Heart right ventricle (tissue), 16 donors: ENCODE measurements at regions of chr9 and their contacts with region 1.

Region 1: DNA sequence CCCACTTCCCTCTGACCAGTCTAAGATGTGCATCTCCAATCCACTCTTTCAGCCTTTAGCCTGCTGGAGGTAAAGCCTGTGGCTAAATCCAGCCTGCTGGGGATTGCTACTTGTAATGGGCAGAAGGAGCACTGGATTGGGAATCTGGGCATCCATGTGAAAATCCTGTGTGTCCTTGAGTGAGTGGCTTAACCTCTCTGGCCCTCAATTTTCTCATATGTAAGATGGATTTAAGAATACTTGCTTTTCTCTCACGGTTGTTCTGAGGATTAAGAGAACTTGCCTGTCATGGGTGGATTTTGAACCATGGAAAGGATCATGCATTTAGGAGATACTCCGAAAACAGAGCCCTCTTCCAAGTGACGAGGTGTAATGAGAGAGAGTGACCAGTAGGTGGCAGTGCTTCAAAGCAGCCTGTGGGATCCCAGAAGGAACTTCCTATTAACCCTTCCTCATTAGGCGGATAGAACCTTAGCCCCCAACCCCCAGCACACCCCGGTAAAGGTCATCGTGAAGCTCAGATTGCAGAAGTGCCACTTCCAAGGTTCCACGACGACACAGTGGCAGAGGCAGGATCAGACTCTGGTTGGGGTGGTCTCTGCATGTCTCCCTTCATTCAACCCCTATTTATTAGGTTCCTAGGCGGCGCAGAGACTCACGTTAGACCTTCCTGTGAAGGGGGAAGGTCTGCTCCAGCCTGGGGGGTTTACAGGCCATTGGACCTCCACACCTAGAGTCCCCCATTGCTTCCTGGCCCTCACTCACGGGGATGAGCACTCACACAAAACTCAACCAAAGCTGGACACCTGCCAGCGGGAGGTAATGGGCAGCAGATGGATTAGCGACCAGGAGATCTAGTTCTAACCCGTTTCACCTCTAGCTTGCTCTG is 68.7 kb upstream of the ZNF618 start:
- DNase-seq: peak in 1 of 2 donors; percentile 48
- ATAC-seq: peak; percentile 47 to 83 (median 70)
- H3K4me3 ChIP-seq: peak overlapping the region in 5 of 10 donors; percentile 7 to 24 (median 21)
- H3K27ac ChIP-seq: no peak overlapping the region
- H3K4me1 ChIP-seq: peaks cover 0 to 12% (median 4%) of the 10 kb centered on the region in 9 donors
- H3K27me3 ChIP-seq: peaks cover 0 to 16% (median 2%) of the 10 kb centered on the region in 7 donors
- CTCF ChIP-seq: peak; percentile 82 to 94 (median 90)

Region 2: GRCh38 chr9:113737517-113738271 is 69.7 kb before region 1 on chr9:
- intact Hi-C with region 1: loop called in 1 of 10 experiments (anchors 5 kb)
- DNase-seq: peak in 1 of 2 donors; percentile 42
- ATAC-seq: peak in 1 of 8 donors; percentile 57
- H3K4me3 ChIP-seq: no peak overlapping the region
- H3K27ac ChIP-seq: no peak overlapping the region
- H3K4me1 ChIP-seq: no peaks in the 10 kb centered on the region
- H3K27me3 ChIP-seq: peaks cover 0 to 23% (median 15%) of the 10 kb centered on the region in 7 donors
- CTCF ChIP-seq: peak; percentile 26 to 83 (median 69)

Region 3: GRCh38 chr9:113756476-113757192 is 50.8 kb before region 1 on chr9:
- intact Hi-C with region 1: no loop called
- DNase-seq: no peak
- ATAC-seq: no peak
- H3K4me3 ChIP-seq: no peak overlapping the region
- H3K27ac ChIP-seq: no peak overlapping the region
- H3K4me1 ChIP-seq: peaks cover 0 to 6% (median 0%) of the 10 kb centered on the region in 9 donors
- H3K27me3 ChIP-seq: peaks cover 0 to 34% (median 16%) of the 10 kb centered on the region in 7 donors
- CTCF ChIP-seq: no peak

Region 4: GRCh38 chr9:113844466-113844865 is 37.0 kb after region 1 on chr9:
- intact Hi-C with region 1: no loop called
- DNase-seq: no peak
- ATAC-seq: no peak
- H3K4me3 ChIP-seq: no peak overlapping the region
- H3K27ac ChIP-seq: no peak overlapping the region
- H3K4me1 ChIP-seq: no peaks in the 10 kb centered on the region
- H3K27me3 ChIP-seq: peaks cover 0 to 4% (median 0%) of the 10 kb centered on the region in 7 donors
- CTCF ChIP-seq: no peak

Region 5: GRCh38 chr9:113876151-113876992 is 69.0 kb after region 1 on chr9 and contains the start of gene ZNF618:
- intact Hi-C with region 1: loop called in 5 of 10 experiments (anchors 5 to 10 kb)
- DNase-seq: peak; percentile 11 to 40
- ATAC-seq: peak; percentile 50 to 89 (median 70)
- H3K4me3 ChIP-seq: peak within 1 kb of the TSS; percentile 68 to 93 (median 86)
- H3K27ac ChIP-seq: peak within 1 kb of the TSS in 9 of 10 donors; percentile 35 to 82 (median 72)
- H3K4me1 ChIP-seq: peaks cover 0 to 32% (median 16%) of the 10 kb centered on the region in 9 donors
- H3K27me3 ChIP-seq: peaks cover 0 to 12% (median 0%) of the 10 kb centered on the region in 7 donors
- CTCF ChIP-seq: peak in 7 of 9 donors; percentile 38 to 61 (median 47)
- total RNA-seq, gene ZNF618: 1.1 to 2.5 (median 1.6) TPM

Region 6: DNA sequence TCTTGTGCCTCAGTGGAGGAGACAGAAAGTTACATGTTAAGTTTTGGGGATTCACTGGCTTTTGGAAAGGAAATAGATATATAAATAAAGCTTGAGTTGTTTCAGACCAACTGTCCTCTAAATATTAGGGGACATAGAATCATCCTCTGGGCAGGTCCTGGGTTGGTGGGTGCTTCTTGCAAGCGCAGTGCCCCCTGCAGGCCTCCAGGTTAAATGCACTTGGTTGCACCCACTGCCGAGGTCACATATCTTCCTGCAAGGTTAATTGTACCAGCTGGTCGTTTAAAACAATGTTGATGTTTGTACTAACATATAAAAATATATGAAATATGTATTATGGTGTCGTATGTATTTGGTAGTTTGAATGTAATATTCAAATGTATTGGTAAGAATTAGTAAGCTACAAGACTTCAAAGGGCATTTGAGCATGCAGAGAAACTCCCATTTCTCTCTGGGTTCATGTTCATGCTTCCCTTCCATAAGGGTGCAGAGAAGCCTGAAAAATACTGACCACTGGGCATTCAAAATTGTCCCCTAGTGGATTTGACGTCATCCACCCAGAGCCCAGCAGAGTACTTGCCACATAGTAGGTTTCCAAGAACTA is 155.7 kb after region 1 on chr9:
- intact Hi-C with region 1: loop called in 3 of 10 experiments (anchors 1 to 10 kb)
- DNase-seq: peak in 1 of 2 donors; percentile 31
- ATAC-seq: no peak
- H3K4me3 ChIP-seq: no peak overlapping the region
- H3K27ac ChIP-seq: no peak overlapping the region
- H3K4me1 ChIP-seq: peaks cover 0 to 7% (median 2%) of the 10 kb centered on the region in 9 donors
- H3K27me3 ChIP-seq: no peaks in the 10 kb centered on the region
- CTCF ChIP-seq: peak; percentile 10 to 70 (median 57)

Region 7: GRCh38 chr9:113993838-113994540 is 186.6 kb after region 1 on chr9:
- intact Hi-C with region 1: loop called in 1 of 10 experiments (anchors 10 kb)
- DNase-seq: peak; percentile 86 to 89
- ATAC-seq: peak; percentile 81 to 95 (median 90)
- H3K4me3 ChIP-seq: no peak overlapping the region
- H3K27ac ChIP-seq: peak overlapping the region in 4 of 10 donors; percentile 8 to 48 (median 38)
- H3K4me1 ChIP-seq: peaks cover 21 to 65% (median 42%) of the 10 kb centered on the region in 9 donors
- H3K27me3 ChIP-seq: no peaks in the 10 kb centered on the region
- CTCF ChIP-seq: no peak

Region 8: DNA sequence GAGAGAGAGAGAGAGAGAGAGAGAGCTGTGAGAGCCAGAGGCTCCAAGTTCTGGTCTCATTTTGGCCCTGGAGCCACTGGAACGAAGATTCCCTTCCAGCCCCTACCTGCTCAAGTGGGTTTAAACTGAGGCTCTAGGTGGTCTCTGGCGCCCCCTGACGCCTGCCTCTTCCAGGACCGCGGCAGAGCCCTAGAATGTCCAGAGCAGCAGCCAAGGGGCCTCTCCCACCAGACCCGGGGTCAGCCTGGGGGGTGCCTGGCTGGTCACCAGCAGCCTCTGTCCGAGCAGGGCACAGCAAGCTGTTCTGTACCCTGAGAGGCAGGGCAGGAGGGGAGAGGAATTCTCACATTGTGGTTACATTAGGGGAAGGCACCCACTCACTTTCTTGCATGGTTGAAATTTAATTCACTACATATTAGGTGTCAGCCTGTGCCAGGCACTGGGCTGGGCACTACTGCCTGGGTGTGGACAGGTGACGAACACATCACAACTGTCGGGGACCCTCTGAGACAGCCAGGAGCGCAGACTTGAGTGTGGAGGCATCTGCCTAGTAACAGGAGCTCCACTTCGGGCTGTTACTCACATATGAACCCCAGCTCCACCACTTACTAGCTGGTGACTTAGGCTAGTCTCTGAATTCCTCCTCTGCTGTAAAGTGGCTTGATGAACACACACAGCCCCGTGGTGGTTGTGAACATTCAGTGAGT is 226.1 kb after region 1 on chr9:
- intact Hi-C with region 1: loop called (anchors 1 to 10 kb)
- DNase-seq: peak in 1 of 2 donors; percentile 48
- ATAC-seq: peak; percentile 54 to 84 (median 73)
- H3K4me3 ChIP-seq: no peak overlapping the region
- H3K27ac ChIP-seq: no peak overlapping the region
- H3K4me1 ChIP-seq: peaks cover 0 to 7% (median 0%) of the 10 kb centered on the region in 9 donors
- H3K27me3 ChIP-seq: no peaks in the 10 kb centered on the region
- CTCF ChIP-seq: peak; percentile 23 to 74 (median 65)